Activated CD8-positive, alpha-beta T cell treated with anti-CD3 and anti-CD28 coated beads for 36 hours (primary cell): ENCODE measurements at regions of chr10 and their contacts with region 1.

Region 1: DNA sequence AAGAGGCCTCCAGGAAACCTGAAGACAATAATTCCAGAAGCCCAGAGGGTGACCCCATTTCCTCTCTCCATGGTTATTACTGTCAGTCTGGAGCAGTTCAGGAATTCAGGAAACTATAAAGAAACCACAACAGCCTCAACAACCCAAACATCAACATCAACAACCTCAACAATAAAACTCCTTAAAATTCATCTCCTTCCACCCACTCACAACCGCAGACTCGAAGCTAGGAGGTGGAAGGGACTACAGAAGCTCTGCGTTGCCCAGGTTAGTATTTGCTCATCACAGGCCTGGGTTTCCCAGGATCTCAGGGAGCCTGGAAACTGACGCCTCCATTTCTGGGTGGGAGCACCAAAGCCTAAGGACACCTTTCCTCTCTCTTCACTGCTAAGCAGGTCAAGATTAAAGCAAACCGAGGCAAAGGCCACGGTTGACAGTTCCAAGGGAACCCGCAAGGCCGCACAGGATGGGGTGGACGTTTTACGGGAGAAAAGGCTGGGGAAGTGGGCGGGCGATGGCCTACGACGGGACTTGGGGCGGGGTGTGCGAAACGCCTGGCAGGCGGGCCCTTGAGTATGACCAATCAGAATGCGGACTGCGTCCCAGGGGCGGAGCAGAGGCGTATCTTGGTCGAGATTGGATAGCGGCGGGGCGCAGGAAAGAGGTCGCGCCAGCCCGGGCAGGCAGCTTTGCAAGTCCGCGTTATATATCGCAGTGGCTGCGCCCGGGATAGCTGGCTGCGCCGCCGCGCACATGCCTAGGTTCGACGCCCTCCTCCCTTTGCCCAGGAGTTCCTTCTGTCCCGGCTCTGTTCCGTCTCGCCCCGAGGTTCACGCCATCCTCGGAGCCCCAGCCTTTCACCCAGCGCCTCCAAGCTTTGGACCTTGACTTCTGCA is at the start of gene ELOVL3:
- DNase-seq: peak; percentile 91
- ATAC-seq: peak; percentile 91
- H3K4me3 Mint-ChIP-seq: peak within 1 kb of the TSS; percentile 37
- H3K27ac Mint-ChIP-seq: no peak within 1 kb of the TSS
- H3K4me1 Mint-ChIP-seq: peaks cover 16% of the 10 kb centered on the region
- H3K27me3 Mint-ChIP-seq: peaks cover 43% of the 10 kb centered on the region
- CTCF ChIP-seq: no peak
- total RNA-seq, gene ELOVL3: not detected

Region 2: GRCh38 chr10:102045292-102045691 is 180.6 kb before region 1 on chr10:
- CTCF ChIA-PET with region 1: no interaction called
- POLR2A ChIA-PET with region 1: no interaction called
- intact Hi-C with region 1: no loop called
- DNase-seq: no peak
- ATAC-seq: no peak
- H3K4me3 Mint-ChIP-seq: no peak overlapping the region
- H3K27ac Mint-ChIP-seq: peak overlapping the region; percentile 39
- H3K4me1 Mint-ChIP-seq: peaks cover 26% of the 10 kb centered on the region
- H3K27me3 Mint-ChIP-seq: no peaks in the 10 kb centered on the region
- CTCF ChIP-seq: no peak

Region 3: GRCh38 chr10:102167861-102168260 is 58.0 kb before region 1 on chr10:
- CTCF ChIA-PET with region 1: interaction called, 126 read pairs
- POLR2A ChIA-PET with region 1: interaction called, 7 read pairs
- intact Hi-C with region 1: no loop called
- DNase-seq: no peak
- ATAC-seq: no peak
- H3K4me3 Mint-ChIP-seq: no peak overlapping the region
- H3K27ac Mint-ChIP-seq: no peak overlapping the region
- H3K4me1 Mint-ChIP-seq: peaks cover 5% of the 10 kb centered on the region
- H3K27me3 Mint-ChIP-seq: no peaks in the 10 kb centered on the region
- CTCF ChIP-seq: no peak

Region 4: DNA sequence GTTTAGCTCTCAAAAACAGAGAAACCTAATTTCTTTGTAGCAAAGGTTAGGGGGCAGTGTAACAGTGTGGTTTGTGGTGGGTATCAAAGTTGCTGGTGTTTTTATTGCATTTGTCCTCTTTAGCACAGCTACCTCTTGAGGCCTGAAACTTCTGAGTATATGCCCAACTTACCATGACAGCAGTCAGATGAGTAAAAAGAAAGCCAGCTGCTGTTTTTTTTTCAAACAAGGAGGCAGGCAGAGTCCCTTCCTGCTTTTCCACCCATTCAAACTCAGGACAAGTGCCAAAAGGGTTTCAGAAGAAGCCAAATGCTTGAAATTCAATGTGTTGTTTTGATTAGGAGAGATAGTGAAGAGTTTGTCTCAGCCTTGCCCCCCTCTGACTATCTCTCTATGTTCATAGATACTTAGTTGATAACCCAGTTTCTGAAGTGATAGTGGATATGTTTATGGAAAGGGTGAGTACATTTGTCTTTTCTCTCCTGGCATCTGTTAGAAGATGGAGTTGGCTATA is 42.5 kb after region 1 on chr10:
- CTCF ChIA-PET with region 1: interaction called, 66 read pairs
- POLR2A ChIA-PET with region 1: interaction called, 4 read pairs
- intact Hi-C with region 1: no loop called
- DNase-seq: peak; percentile 16
- ATAC-seq: peak; percentile 60
- H3K4me3 Mint-ChIP-seq: no peak overlapping the region
- H3K27ac Mint-ChIP-seq: peak overlapping the region; percentile 87
- H3K4me1 Mint-ChIP-seq: peaks cover 55% of the 10 kb centered on the region
- H3K27me3 Mint-ChIP-seq: no peaks in the 10 kb centered on the region
- CTCF ChIP-seq: no peak

Region 5: DNA sequence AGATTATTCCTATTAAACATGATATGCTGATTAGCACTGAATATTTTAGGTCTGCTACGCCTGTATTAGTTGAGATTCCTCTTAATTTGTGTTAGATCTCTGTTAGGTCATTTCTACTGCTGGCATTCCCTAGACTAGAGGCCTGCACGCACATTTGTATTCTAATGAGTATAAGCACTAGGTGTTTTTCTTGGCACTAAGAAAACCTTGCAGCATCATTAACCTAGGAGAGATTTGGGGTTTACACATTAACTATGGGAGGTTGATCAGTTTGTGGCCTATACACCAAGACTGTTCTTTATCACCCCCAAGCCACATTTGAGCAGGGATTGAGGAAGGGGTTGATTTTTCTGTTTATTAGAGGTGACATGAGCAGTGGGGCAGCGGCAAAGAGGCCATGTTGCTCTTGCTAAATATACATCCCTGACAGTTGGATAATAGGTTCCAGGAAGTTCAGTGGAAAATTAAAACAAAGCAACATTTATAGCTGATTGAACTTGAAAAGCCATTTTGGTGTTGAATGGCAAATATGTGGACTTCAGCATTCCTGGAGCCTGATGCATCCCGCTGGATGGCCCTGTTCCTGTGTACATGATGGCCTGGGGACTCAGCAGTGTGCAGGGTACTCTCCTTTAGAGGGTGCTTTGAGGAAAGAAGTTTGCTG is 84.6 kb after region 1 on chr10:
- CTCF ChIA-PET with region 1: interaction called, 29 read pairs
- POLR2A ChIA-PET with region 1: no interaction called
- intact Hi-C with region 1: no loop called
- DNase-seq: no peak
- ATAC-seq: no peak
- H3K4me3 Mint-ChIP-seq: no peak overlapping the region
- H3K27ac Mint-ChIP-seq: no peak overlapping the region
- H3K4me1 Mint-ChIP-seq: peaks cover 39% of the 10 kb centered on the region
- H3K27me3 Mint-ChIP-seq: no peaks in the 10 kb centered on the region
- CTCF ChIP-seq: no peak

Region 6: GRCh38 chr10:102368072-102368471 is 142.2 kb after region 1 on chr10:
- CTCF ChIA-PET with region 1: interaction called, 886 read pairs
- POLR2A ChIA-PET with region 1: no interaction called
- intact Hi-C with region 1: no loop called
- DNase-seq: no peak
- ATAC-seq: no peak
- H3K4me3 Mint-ChIP-seq: no peak overlapping the region
- H3K27ac Mint-ChIP-seq: no peak overlapping the region
- H3K4me1 Mint-ChIP-seq: no peaks in the 10 kb centered on the region
- H3K27me3 Mint-ChIP-seq: no peaks in the 10 kb centered on the region
- CTCF ChIP-seq: no peak

Region 7: DNA sequence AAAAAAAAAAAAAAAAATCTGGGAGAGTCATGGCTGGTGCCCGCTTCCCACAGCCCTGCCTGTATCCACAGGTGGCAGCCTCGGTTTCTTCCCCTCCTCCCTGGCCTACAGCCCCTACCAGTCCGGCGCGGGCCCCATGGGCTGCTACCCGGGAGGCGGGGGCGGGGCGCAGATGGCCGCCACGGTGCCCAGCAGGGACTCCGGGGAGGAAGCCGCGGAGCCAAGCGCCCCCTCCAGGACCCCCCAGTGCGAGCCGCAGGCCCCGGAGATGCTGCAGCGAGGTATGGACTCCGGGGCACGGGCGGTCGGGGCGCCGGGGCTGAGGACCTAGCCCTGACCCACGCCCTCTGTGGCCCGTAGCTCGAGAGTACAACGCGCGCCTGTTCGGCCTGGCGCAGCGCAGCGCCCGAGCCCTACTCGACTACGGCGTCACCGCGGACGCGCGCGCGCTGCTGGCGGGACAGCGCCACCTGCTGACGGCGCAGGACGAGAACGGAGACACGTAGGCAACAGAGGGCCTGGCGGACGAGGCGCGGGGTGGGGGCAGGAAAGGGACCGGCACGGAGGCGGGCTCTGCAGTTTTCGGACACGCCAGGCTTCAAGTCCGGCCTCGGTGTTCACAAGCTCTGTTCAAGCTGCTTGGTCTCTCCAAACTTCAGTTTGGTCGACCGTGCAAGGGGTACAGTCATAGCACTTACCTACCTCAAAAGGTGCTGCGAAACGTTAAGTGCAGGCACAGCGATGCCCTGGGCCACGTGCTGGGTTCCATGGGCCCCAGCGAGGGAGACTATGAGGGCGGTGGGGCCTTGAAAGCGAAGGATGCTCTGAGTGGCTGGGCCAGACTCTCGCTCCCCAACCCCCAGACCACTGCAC is 173.6 kb after region 1 on chr10:
- CTCF ChIA-PET with region 1: interaction called, 44 read pairs
- POLR2A ChIA-PET with region 1: interaction called, 7 read pairs
- intact Hi-C with region 1: no loop called
- DNase-seq: peak; percentile 92
- ATAC-seq: peak; percentile 58
- H3K4me3 Mint-ChIP-seq: peak overlapping the region; percentile 93
- H3K27ac Mint-ChIP-seq: peak overlapping the region; percentile 86
- H3K4me1 Mint-ChIP-seq: peaks cover 47% of the 10 kb centered on the region
- H3K27me3 Mint-ChIP-seq: no peaks in the 10 kb centered on the region
- CTCF ChIP-seq: peak; percentile 98

Region 8: GRCh38 chr10:102476466-102477141 is 250.7 kb after region 1 on chr10:
- CTCF ChIA-PET with region 1: interaction called, 24 read pairs
- POLR2A ChIA-PET with region 1: interaction called, 3 read pairs
- intact Hi-C with region 1: loop called (anchors 10 kb)
- DNase-seq: peak; percentile 35
- ATAC-seq: no peak
- H3K4me3 Mint-ChIP-seq: no peak overlapping the region
- H3K27ac Mint-ChIP-seq: peak overlapping the region; percentile 77
- H3K4me1 Mint-ChIP-seq: peaks cover 29% of the 10 kb centered on the region
- H3K27me3 Mint-ChIP-seq: no peaks in the 10 kb centered on the region
- CTCF ChIP-seq: no peak